Mammary epithelial cell (primary cell): ENCODE measurements at regions of chr9 and their contacts with region 1.

Region 1: DNA sequence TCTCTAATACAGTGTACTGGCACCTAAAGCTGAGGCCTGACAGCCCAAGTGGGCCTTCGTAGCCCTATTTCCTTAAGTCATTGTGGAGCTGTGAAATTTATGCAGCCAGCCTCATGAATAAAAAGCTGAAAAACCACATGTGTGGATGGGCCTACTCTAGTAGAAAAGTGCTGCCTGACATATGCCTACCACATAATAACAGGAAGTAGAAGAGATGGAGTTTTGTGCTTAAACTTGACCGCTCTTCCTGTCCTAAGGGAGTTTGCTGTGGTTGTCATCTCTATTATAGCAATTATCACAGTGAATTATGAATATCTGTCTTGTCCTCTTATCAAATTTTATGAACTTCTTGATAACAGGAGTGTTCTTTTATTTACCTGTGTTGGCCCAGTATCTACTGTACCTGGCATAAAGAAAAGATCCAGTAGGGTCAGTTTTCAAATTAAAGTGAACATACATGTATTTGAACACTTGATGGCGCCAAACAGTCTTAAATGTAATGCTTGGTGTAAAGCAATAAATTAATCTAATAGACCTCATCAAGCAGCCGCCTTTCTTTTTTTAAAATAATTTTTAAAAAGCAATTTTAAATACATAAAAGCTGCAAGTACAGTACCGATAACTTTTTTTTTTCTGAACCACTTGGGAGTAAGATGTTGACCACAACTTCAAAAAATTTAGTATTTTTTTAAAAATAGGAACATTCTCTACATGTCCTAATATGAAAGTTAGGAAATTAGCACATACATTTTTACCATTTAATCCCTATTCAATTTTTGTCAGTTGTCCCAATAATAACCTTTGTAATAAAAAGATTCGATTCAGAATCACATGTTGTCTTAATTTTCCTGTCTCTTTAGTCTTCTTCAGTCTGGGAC is 51.0 kb downstream of the FKTN start:
- DNase-seq: peak; percentile 34
- H3K4me3 ChIP-seq: no peak overlapping the region
- H3K27ac ChIP-seq: no peak overlapping the region
- H3K4me1 ChIP-seq: no peaks in the 10 kb centered on the region
- H3K27me3 ChIP-seq: no peaks in the 10 kb centered on the region
- CTCF ChIP-seq: peak; percentile 53 to 57

Region 2: DNA sequence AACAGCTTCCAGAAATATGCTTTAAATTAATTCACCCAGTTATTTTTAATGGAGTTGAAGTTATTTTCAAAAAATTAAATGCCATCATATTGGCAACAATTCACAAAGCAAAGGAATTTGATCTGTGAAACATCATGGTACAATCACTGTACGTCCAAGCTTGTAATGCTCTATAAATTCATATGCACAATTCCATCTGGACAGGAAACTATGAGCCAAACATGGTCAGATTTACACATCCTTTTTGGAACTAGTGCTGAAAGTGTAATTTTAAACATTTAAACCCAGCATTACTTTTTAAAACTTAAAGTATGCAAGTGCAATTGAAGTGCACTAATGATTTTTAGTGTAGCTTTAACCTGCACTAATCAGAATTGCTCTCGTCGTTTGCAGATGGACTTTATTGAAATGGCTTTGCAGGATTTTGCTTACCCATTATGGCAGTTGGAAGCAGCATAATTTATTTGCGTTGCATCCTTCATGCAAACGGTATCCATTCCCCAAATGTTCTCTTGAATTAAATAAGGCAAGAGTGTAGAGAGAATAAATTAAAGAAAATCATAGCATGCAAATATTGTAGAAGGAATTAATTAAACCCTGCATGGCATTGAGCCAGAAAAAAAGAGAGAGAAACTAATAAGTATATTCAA is 1125.9 kb before region 1 on chr9:
- CTCF ChIA-PET with region 1: no interaction called
- dilution Hi-C with region 1: no loop called
- in situ Hi-C with region 1: no loop called
- intact Hi-C with region 1: no loop called
- DNase-seq: no peak
- H3K4me3 ChIP-seq: no peak overlapping the region
- H3K27ac ChIP-seq: no peak overlapping the region
- H3K4me1 ChIP-seq: no peaks in the 10 kb centered on the region
- H3K27me3 ChIP-seq: no peaks in the 10 kb centered on the region
- CTCF ChIP-seq: no peak

Region 3: DNA sequence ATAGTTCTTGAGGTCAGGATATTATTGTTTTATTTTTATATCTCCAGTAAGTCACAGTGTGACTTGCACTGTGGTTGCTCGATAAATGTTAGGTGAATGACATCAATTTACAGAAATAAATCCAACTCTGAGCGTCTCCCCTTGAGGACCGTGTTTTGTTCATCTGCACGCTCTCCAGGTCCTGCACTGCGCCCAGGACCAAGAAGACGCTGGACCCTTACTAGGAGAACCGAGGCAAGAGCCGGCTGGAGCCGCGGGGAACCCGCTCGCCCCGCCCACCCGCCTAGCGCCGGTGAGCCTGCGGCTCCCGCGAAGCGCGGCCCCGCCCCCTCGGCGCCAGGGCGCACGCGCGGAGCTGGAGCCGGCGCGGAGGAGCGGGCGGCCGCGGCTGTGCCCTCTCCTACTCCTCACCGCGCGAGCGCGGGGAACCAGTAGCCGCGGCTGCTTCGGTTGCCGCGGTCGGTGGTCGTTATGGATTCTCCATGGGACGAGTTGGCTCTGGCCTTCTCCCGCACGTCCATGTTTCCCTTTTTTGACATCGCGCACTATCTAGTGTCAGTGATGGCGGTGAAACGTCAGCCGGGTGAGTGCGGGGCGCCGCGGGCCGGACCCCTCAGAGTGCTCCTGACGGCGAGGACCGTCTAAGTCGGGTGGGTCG is 85.4 kb after region 1 on chr9 and contains the start of gene TMEM38B:
- CTCF ChIA-PET with region 1: no interaction called
- dilution Hi-C with region 1: no loop called
- in situ Hi-C with region 1: no loop called
- intact Hi-C with region 1: loop called (anchors 5 kb)
- DNase-seq: peak; percentile 67
- H3K4me3 ChIP-seq: peak within 1 kb of the TSS; percentile 76 to 89 (median 87)
- H3K27ac ChIP-seq: peak within 1 kb of the TSS; percentile 14
- H3K4me1 ChIP-seq: peaks cover 8% of the 10 kb centered on the region
- H3K27me3 ChIP-seq: peaks cover 2% of the 10 kb centered on the region
- CTCF ChIP-seq: no peak
- total RNA-seq, gene TMEM38B: 10.5 to 16.8 TPM

Region 4: GRCh38 chr9:105713260-105714019 is 104.5 kb after region 1 on chr9:
- CTCF ChIA-PET with region 1: no interaction called
- dilution Hi-C with region 1: no loop called
- in situ Hi-C with region 1: no loop called
- intact Hi-C with region 1: loop called (anchors 1 kb)
- DNase-seq: no peak
- H3K4me3 ChIP-seq: no peak overlapping the region
- H3K27ac ChIP-seq: no peak overlapping the region
- H3K4me1 ChIP-seq: no peaks in the 10 kb centered on the region
- H3K27me3 ChIP-seq: no peaks in the 10 kb centered on the region
- CTCF ChIP-seq: no peak

Region 5: DNA sequence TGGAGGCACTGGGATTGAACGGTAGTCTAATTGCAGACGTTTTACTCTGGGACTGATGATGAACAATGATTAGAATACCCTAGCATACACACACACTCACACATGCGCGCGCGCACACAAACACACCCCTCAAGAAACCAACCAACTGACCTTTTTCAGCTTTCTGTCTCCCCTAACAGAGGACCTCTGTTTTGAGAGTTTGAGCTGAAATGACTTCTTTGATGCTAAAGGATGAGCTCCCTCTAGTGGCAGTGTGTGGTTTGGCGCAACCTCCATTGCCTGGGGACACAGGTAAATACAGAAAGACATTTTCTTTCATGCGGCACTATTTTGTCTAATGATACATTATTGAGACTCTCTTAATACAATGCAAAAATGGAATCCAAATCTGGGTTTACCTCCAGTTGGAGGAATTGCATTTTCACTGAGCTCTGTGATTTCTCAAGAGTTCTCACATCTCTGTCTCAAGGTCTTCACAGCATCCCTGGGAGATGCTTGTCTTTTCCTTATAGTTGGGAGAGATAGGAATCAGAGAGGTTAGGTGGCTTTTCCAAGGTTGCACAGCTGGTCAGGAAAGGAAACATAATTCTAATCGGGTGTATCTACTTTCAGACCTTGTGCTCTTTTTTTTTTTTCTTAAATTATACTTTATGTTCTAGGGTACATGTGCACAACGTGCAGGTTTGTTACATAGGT is 272.8 kb after region 1 on chr9:
- CTCF ChIA-PET with region 1: no interaction called
- dilution Hi-C with region 1: no loop called
- in situ Hi-C with region 1: no loop called
- intact Hi-C with region 1: loop called (anchors 2 kb)
- DNase-seq: peak; percentile 51
- H3K4me3 ChIP-seq: no peak overlapping the region
- H3K27ac ChIP-seq: no peak overlapping the region
- H3K4me1 ChIP-seq: no peaks in the 10 kb centered on the region
- H3K27me3 ChIP-seq: no peaks in the 10 kb centered on the region
- CTCF ChIP-seq: peak; percentile 91 to 95